Prostate gland (tissue), 2 donors: ENCODE measurements at regions of chr7 and their contacts with region 1.

Region 1: DNA sequence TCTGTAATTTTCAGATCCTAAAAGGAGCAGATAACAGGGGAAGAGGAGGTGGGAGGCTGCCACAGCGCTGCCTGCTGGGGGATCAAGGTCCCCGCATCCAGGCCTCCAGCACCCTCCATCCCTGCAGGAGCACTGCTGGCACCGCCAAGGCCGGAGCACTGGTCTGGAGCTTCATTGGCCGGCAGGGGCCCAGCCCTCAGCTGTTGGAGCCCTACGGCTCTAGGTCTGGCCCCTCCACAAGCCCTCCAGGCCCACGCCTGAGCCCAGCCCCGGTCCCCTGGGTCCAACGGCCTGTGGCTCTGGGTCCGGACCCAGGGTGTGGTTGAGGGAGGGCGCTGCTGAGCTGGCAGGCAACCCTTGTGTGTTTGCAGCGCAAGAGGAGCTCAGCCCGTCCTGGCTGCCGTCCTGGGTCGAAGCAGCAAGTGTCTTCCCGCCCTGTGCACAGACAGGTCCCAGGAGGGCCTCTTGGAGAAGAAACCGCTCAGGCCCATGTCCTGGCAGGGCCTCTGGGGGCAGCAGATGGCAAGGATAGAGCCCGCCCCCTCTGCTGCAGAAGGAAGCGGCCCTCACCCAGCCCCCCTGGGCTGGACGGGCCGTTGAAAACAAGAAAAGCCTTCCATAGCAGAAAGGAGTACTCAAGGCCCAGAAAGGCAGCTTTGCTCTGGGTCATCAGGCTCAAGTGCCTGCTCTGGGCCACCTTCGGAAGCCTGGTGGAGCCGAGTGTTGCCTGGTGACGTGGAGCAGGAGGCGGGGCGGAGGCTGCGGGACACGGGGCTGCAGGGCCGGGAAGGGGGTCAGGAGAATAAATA is 54.3 kb upstream of the TNRC18 start:
- DNase-seq: no peak
- H3K4me3 ChIP-seq: peak overlapping the region in 1 of 2 donors; percentile 11
- H3K27ac ChIP-seq: no peak overlapping the region
- H3K4me1 ChIP-seq: no peaks in the 10 kb centered on the region
- H3K27me3 ChIP-seq: no peaks in the 10 kb centered on the region
- CTCF ChIP-seq: peak in 1 of 4 experiments; percentile 21
- POLR2A ChIP-seq: no peak

Region 2: DNA sequence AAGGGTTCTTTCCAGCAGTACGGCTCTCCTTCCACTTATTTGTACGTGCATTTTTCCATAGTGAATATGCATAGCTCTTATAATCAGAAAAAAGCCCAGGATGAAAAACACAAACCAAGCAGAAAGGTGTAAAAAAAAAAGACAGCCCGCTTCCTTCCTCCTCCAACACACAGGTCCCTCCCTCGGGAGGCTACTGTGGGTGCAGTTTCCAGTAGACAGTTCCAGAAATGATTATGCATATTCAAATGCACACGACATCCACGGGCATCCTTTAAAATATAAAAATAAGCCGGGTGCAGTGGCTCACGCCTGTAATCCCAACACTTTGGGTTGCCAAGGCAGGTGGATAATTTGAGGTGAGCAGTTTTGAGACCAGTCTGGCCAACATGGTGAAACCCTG is 114.2 kb before region 1 on chr7:
- intact Hi-C with region 1: no loop called
- DNase-seq: no peak
- H3K4me3 ChIP-seq: no peak overlapping the region
- H3K27ac ChIP-seq: no peak overlapping the region
- H3K4me1 ChIP-seq: peaks cover 14% of the 10 kb centered on the region
- H3K27me3 ChIP-seq: no peaks in the 10 kb centered on the region
- CTCF ChIP-seq: no peak
- POLR2A ChIP-seq: no peak

Region 3: GRCh38 chr7:5429857-5430611 is 47.9 kb before region 1 on chr7:
- intact Hi-C with region 1: loop called (anchors 5 kb)
- DNase-seq: peak; percentile 87
- H3K4me3 ChIP-seq: peak overlapping the region; percentile 74 to 95
- H3K27ac ChIP-seq: peak overlapping the region; percentile 100
- H3K4me1 ChIP-seq: peaks cover 8% of the 10 kb centered on the region
- H3K27me3 ChIP-seq: no peaks in the 10 kb centered on the region
- CTCF ChIP-seq: no peak
- POLR2A ChIP-seq: peak; percentile 67

Region 4: GRCh38 chr7:5713124-5713912 is 235.4 kb after region 1 on chr7:
- intact Hi-C with region 1: no loop called
- DNase-seq: no peak
- H3K4me3 ChIP-seq: no peak overlapping the region
- H3K27ac ChIP-seq: no peak overlapping the region
- H3K4me1 ChIP-seq: no peaks in the 10 kb centered on the region
- H3K27me3 ChIP-seq: no peaks in the 10 kb centered on the region
- CTCF ChIP-seq: no peak
- POLR2A ChIP-seq: no peak